Activated CD4-positive, alpha-beta T cell treated with anti-CD3 and anti-CD28 coated beads, Interleukin-2, amount 10 ng/mL, durations not matched to agents 24 days and 14 days (primary cell): ENCODE measurements at regions of chr7 and their contacts with region 1.

Region 1: GRCh38 chr7:73557108-73557396 is 438 bp downstream of the BCL7B start:
- DNase-seq: peak; percentile 98
- H3K4me3 Mint-ChIP-seq: peak overlapping the region; percentile 89
- H3K27ac Mint-ChIP-seq: peak overlapping the region; percentile 95
- H3K4me1 Mint-ChIP-seq: peaks cover 32% of the 10 kb centered on the region
- H3K27me3 Mint-ChIP-seq: no peaks in the 10 kb centered on the region

Region 2: DNA sequence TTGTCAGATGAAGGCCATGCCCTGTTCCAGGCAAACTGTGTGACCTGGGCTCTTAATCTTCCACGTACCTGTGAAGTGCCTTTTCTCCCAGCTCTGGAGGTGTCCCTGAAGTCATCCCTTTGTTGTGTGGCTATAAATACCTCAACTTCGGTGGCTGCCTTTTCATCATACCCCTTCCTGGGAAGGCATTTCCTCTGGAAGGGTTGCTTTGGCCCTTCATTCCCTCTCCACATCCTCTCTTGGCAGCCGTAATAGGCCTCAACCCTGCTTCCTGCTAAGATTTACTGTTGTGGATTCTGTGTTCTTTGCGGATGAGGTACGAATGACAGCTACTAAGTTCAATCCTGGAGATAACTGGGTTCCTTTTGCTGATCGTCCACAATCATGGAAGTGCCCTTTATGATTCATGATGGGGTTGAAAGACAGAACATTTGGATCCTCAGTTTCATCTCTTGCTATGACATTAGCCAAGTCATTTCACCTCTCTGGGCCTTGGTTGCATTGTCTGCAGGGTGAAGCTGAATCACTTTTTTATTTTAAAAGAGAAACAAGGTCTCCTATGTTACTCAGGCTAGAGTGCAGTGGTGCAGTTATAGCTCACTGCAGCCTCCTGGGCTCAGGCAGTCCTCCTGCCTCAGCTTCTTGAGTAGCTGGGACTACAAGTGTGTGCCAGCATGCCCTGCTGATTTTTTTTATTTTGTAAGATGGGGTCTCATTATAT is 205.4 kb before region 1 on chr7:
- intact Hi-C with region 1: no loop called
- DNase-seq: no peak
- H3K4me3 Mint-ChIP-seq: no peak overlapping the region
- H3K27ac Mint-ChIP-seq: no peak overlapping the region
- H3K4me1 Mint-ChIP-seq: no peaks in the 10 kb centered on the region
- H3K27me3 Mint-ChIP-seq: peaks cover 2% of the 10 kb centered on the region

Region 3: DNA sequence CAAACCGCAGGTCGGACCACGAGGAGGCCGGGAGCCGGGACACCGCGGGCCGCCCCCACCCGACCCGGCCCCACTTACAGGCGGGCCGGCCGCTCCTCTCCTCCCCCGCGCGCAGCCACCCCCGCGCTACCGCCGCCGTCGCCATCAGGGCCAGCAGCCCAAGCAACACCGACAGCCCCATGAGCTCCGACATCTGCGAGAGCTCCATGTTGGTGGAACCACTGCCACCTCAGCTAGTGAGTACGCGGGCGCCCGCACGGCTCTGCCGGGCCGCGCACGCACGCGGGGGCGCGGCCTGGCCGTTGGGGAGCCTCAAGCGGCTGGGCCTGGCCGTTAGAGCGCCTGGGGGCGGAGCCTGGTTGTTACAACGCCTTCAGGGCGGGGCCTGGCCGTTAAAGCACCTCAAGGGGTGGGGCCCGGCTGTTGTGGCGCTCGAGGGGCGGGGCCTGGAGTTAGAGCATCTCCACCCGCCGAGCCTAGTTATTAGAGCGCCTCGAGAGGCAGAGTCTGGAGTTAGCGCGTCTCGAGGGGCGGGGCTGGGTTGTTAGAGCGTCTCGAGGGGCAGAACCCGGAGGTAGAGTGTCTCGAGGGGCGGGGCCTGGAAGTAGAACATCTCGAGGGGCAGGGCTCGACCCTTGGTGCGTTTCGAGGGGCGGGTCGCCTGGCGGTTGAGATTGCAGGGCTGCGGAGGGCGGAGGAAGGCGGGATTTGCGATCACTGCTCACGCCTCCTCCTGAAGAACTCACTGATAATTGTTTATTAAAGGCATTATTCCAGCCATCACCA is 21.5 kb after region 1 on chr7 and contains the start of gene TBL2:
- intact Hi-C with region 1: loop called (anchors 1 kb)
- DNase-seq: peak; percentile 100
- H3K4me3 Mint-ChIP-seq: peak within 1 kb of the TSS; percentile 99
- H3K27ac Mint-ChIP-seq: peak within 1 kb of the TSS; percentile 97
- H3K4me1 Mint-ChIP-seq: peaks cover 28% of the 10 kb centered on the region
- H3K27me3 Mint-ChIP-seq: no peaks in the 10 kb centered on the region
- total RNA-seq, gene TBL2: 41.4 and 49.1 TPM in 2 replicates